ENCODE measurements at regions of chr16 and their contacts with region 1.

Region 1: GRCh38 chr16:24010440-24011089 is 174.8 kb downstream of the PRKCB start:
- DNase-seq: peak; percentile 70
- ATAC-seq: peak; percentile 59
- H3K4me3 ChIP-seq: no peak overlapping the region
- H3K27ac ChIP-seq: no peak overlapping the region
- H3K4me1 ChIP-seq: no peaks in the 10 kb centered on the region
- H3K27me3 ChIP-seq: peaks cover 18% of the 10 kb centered on the region; the same call in 1 of the 2 replicates
- CTCF ChIP-seq: peak; percentile 73

Region 2: DNA sequence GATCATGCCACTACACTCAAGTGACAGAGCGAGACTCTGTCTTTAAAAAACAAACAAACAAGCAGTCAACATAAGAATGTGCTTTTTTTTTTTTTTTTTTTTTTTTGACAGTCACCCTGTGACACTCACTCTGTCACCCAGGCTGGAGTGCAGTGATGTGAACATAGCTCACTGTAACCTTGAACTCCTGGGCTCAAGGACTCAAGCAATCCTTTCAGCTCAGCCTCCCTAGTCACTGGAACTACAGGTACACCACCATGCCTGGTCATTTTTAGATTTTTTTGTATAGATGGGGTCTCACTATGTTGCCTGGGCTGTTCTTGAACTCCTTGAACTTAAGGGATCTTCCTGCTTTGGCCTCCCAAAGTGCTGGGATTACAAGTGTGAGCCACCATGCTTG is 271.0 kb before region 1 on chr16:
- CTCF ChIA-PET with region 1: no interaction called
- POLR2A ChIA-PET with region 1: no interaction called
- intact Hi-C with region 1: loop called (anchors 5 kb)
- DNase-seq: no peak
- ATAC-seq: no peak
- H3K4me3 ChIP-seq: no peak overlapping the region
- H3K27ac ChIP-seq: no peak overlapping the region
- H3K4me1 ChIP-seq: no peaks in the 10 kb centered on the region
- H3K27me3 ChIP-seq: peaks cover 33% of the 10 kb centered on the region
- CTCF ChIP-seq: no peak

Region 3: GRCh38 chr16:23784811-23785447 is 225.6 kb before region 1 on chr16:
- CTCF ChIA-PET with region 1: no interaction called
- POLR2A ChIA-PET with region 1: no interaction called
- intact Hi-C with region 1: no loop called
- DNase-seq: peak; percentile 14
- ATAC-seq: no peak
- H3K4me3 ChIP-seq: no peak overlapping the region
- H3K27ac ChIP-seq: no peak overlapping the region
- H3K4me1 ChIP-seq: no peaks in the 10 kb centered on the region
- H3K27me3 ChIP-seq: no peaks in the 10 kb centered on the region
- CTCF ChIP-seq: no peak

Measured in PC-3 (cell line).